ENCODE measurements at regions of chr2 and their contacts with region 1.

Region 1: DNA sequence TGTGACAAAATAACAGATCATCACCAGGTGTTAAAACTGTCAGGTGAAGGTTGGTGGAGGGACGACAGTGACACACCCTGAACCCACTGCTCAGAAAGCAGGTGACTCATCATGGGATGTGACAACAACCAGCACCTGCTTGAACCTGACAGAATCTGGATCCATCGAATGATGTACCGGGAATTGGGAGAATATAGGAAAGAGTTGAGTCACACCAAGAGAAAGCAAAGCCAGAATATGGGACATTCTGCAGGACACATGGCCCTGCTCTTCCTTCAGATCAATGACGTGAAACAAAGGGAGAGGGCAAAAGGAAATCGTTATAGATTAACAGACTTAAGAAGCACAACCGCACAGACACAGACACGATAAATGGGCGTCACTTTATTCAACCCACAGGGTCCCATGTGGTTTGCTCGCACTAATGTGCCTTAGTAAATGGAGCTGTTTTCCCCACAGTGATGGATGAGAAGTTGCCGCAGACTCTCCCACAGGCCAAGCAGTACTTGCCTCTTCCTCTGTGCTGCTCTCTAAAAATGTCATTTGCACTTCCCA is 100.1 kb downstream of the CRACDL start:
- DNase-seq: no peak
- H3K4me3 ChIP-seq: no peak overlapping the region
- H3K27ac ChIP-seq: peak overlapping the region; percentile 11
- H3K4me1 ChIP-seq: peaks cover 28% of the 10 kb centered on the region
- H3K27me3 ChIP-seq: no peaks in the 10 kb centered on the region
- CTCF ChIP-seq: no peak

Region 2: GRCh38 chr2:98649135-98649991 is 186.5 kb before region 1 on chr2:
- intact Hi-C with region 1: loop called (anchors 2 kb)
- DNase-seq: peak; percentile 64
- H3K4me3 ChIP-seq: no peak overlapping the region
- H3K27ac ChIP-seq: no peak overlapping the region
- H3K4me1 ChIP-seq: peaks cover 6% of the 10 kb centered on the region
- H3K27me3 ChIP-seq: no peaks in the 10 kb centered on the region
- CTCF ChIP-seq: peak; percentile 100